ENCODE measurements at regions of chr5 and their contacts with region 1.

Region 1: GRCh38 chr5:53262348-53262970 is 152.9 kb upstream of the MOCS2 start:
- DNase-seq: peak; percentile 55
- H3K4me3 Mint-ChIP-seq: no peak overlapping the region
- H3K27ac Mint-ChIP-seq: peak overlapping the region; percentile 8
- H3K4me1 Mint-ChIP-seq: peaks cover 6% of the 10 kb centered on the region
- H3K27me3 Mint-ChIP-seq: no peaks in the 10 kb centered on the region
- CTCF ChIP-seq: peak; percentile 64

Region 2: DNA sequence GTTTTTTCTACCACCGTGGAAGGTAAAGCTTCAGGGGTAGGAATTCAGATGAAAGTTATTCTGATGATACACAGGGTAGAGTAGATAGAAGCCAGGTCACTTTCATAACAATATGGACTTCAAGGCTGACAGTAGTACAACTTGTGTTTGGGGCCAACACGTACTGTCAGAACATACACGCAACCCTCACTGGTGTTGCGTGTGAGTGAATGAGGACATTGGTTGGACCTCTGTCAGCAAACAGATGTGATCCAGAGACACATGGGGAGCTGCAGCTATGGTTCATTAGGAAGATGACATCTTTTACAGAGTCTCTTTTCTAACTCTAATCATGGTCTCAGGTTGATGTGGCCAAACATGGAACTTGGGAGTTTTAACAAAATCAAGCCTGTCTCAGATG is 82.8 kb before region 1 on chr5:
- CTCF ChIA-PET with region 1: no interaction called
- intact Hi-C with region 1: loop called (anchors 2 kb)
- DNase-seq: no peak
- H3K4me3 Mint-ChIP-seq: no peak overlapping the region
- H3K27ac Mint-ChIP-seq: no peak overlapping the region
- H3K4me1 Mint-ChIP-seq: peaks cover 13% of the 10 kb centered on the region
- H3K27me3 Mint-ChIP-seq: no peaks in the 10 kb centered on the region
- CTCF ChIP-seq: no peak

Region 3: DNA sequence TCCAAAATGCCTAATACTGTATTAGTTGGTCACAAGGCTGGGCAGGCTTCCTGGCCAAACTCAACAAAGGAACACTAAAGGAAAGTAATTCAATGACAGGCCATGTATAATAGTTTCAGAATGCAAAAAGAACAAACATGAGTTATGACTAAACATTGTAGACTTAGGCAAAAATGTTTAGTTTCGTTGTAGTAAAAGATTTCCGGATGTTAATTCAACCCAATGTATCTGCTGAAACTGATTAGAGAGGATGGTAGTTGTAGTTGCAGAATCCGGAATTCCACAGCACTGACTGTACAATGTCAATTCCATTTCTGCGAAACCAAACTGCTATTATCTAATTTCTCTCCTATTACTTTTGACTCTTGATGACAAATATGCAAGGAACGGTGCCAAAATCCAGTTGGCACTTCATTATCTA is 100.1 kb after region 1 on chr5:
- CTCF ChIA-PET with region 1: interaction called, 3 read pairs
- intact Hi-C with region 1: loop called (anchors 2 kb)
- DNase-seq: peak; percentile 60
- H3K4me3 Mint-ChIP-seq: no peak overlapping the region
- H3K27ac Mint-ChIP-seq: peak overlapping the region; percentile 99
- H3K4me1 Mint-ChIP-seq: peaks cover 71% of the 10 kb centered on the region
- H3K27me3 Mint-ChIP-seq: no peaks in the 10 kb centered on the region
- CTCF ChIP-seq: no peak

Region 4: GRCh38 chr5:53378590-53379247 is 116.3 kb after region 1 on chr5:
- CTCF ChIA-PET with region 1: no interaction called
- intact Hi-C with region 1: no loop called
- DNase-seq: no peak
- H3K4me3 Mint-ChIP-seq: no peak overlapping the region
- H3K27ac Mint-ChIP-seq: peak overlapping the region; percentile 29
- H3K4me1 Mint-ChIP-seq: peaks cover 11% of the 10 kb centered on the region
- H3K27me3 Mint-ChIP-seq: no peaks in the 10 kb centered on the region
- CTCF ChIP-seq: no peak

Region 5: DNA sequence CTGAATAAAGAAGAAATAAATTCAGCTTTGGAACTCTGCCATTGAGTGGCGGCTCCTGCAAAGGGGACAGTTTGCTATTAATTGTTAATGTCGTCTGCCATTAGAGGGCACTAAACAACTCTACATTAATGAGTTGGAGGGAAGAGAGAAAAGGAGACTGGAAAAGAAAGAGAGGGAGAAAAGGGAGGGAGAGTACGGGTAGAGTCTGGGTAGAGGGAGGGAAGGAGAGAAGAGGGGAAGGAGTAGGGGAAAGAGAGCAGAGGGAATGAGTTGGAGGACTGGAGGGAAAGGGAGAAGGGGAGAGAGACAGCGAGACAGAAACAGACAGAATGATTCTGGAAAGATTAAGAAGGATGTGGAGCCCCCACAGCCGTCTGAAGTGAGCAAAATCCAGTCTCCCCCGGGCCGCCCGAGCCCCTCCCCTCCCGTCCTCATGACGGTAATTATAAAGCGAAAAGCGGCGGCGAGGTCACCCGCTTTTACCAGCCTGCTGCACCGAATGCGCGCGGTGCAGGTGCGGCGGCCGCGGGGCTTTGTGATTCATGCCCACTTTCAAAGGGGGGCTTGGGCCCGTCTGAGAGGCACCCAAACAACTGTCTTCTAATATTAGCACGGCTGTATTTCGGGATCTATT is 216.1 kb after region 1 on chr5:
- CTCF ChIA-PET with region 1: interaction called, 3 read pairs
- intact Hi-C with region 1: loop called (anchors 2 kb)
- DNase-seq: peak; percentile 47
- H3K4me3 Mint-ChIP-seq: peak overlapping the region; percentile 78
- H3K27ac Mint-ChIP-seq: peak overlapping the region; percentile 55
- H3K4me1 Mint-ChIP-seq: peaks cover 15% of the 10 kb centered on the region
- H3K27me3 Mint-ChIP-seq: no peaks in the 10 kb centered on the region
- CTCF ChIP-seq: peak; percentile 60

Region 6: DNA sequence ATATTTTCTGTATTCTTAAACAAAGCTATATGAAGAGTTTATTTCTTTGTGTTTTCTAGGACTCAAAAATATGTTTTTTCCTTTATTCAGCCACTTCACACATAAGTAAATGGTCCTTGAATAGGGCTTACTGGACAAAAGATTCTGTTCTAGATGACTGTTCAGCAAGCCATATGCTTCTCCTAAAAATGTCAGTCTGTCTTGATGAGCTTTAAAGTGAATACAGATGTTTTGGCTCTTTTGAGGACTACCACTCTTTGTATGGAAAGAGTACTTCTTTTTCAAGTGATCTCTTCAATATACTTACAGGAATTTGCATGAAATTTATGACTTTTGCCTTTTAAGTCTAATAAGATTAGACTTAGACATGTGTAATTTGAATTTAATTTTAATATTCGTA is 306.4 kb after region 1 on chr5:
- CTCF ChIA-PET with region 1: no interaction called
- intact Hi-C with region 1: no loop called
- DNase-seq: no peak
- H3K4me3 Mint-ChIP-seq: no peak overlapping the region
- H3K27ac Mint-ChIP-seq: no peak overlapping the region
- H3K4me1 Mint-ChIP-seq: peaks cover 9% of the 10 kb centered on the region
- H3K27me3 Mint-ChIP-seq: no peaks in the 10 kb centered on the region
- CTCF ChIP-seq: no peak

Region 7: DNA sequence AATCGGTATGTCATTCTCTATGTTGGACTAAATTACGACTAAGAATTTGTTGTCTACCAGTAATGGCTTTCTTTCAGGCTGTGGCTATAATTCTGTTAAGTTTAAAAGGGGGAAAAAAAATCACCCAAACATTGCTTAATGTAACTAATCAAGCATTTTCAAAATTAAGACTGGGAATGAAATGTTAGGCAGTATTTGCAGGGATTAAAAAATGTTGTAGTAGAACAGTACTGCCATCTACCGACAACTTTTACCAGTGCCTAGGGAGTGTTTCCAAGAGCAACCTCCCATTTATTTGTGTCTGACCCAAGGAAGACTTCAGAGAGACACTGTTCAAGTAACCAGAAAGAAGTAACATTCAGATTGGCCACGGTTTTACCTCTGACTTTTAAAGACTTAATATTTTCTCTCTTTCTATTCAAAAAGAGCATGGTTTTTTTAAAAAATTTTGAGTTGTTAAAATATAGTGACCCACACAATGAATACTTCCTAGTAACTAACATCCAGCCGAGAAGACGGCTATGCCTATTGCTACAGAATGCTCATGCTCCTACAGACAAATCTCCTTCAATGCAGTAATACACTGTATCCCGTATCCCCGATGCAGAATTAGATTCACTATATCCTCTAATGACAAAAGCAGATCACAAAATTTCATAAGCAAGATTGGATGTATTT is 955.5 kb after region 1 on chr5:
- CTCF ChIA-PET with region 1: no interaction called
- intact Hi-C with region 1: loop called (anchors 5 kb)
- DNase-seq: peak; percentile 54
- H3K4me3 Mint-ChIP-seq: no peak overlapping the region
- H3K27ac Mint-ChIP-seq: no peak overlapping the region
- H3K4me1 Mint-ChIP-seq: no peaks in the 10 kb centered on the region
- H3K27me3 Mint-ChIP-seq: no peaks in the 10 kb centered on the region
- CTCF ChIP-seq: peak; percentile 38

Measured in Calu3 (cell line).